ENCODE measurements at regions of chr12 and their contacts with region 1.

Region 1: DNA sequence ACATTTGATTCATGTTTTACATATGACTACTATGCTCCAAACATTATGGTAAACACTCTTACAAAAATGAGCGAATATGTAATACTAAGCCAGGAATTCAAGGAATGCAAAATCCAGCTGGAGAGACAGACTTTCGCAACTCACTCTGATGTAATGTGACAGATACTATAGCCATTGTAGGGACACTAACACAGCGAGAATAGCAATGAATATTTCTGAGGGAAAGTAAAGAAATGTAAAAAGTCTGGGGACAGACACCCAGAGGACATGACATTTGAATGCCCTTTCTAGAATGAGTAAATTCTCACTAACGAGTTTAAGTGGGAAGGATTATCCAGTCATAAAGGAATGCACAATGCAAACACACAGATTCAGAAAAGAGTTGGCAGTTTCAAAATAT is 121.9 kb downstream of the PIK3C2G start:
- DNase-seq: no peak
- ATAC-seq: no peak
- H3K4me3 ChIP-seq: no peak overlapping the region
- H3K4me3 Mint-ChIP-seq: no peak overlapping the region
- H3K27ac ChIP-seq: no peak overlapping the region
- H3K27ac Mint-ChIP-seq: no peak overlapping the region
- H3K4me1 ChIP-seq: no peaks in the 10 kb centered on the region
- H3K4me1 Mint-ChIP-seq: no peaks in the 10 kb centered on the region
- H3K27me3 ChIP-seq: no peaks in the 10 kb centered on the region
- H3K27me3 Mint-ChIP-seq: no peaks in the 10 kb centered on the region
- CTCF ChIP-seq: no peak

Region 2: GRCh38 chr12:18402872-18403611 is 19.8 kb after region 1 on chr12:
- CTCF ChIA-PET with region 1: no interaction called
- POLR2A ChIA-PET with region 1: no interaction called
- intact Hi-C with region 1: loop called in 1 of 2 experiments (anchors 2 kb)
- DNase-seq: no peak
- ATAC-seq: no peak
- H3K4me3 ChIP-seq: no peak overlapping the region
- H3K4me3 Mint-ChIP-seq: no peak overlapping the region
- H3K27ac ChIP-seq: no peak overlapping the region
- H3K27ac Mint-ChIP-seq: no peak overlapping the region
- H3K4me1 ChIP-seq: no peaks in the 10 kb centered on the region
- H3K4me1 Mint-ChIP-seq: no peaks in the 10 kb centered on the region
- H3K27me3 ChIP-seq: no peaks in the 10 kb centered on the region
- H3K27me3 Mint-ChIP-seq: no peaks in the 10 kb centered on the region
- CTCF ChIP-seq: no peak

Measured in CD8-positive, alpha-beta T cell (primary cell).